CD8-positive, alpha-beta T cell (primary cell): ENCODE measurements at regions of chr7 and their contacts with region 1.

Region 1: DNA sequence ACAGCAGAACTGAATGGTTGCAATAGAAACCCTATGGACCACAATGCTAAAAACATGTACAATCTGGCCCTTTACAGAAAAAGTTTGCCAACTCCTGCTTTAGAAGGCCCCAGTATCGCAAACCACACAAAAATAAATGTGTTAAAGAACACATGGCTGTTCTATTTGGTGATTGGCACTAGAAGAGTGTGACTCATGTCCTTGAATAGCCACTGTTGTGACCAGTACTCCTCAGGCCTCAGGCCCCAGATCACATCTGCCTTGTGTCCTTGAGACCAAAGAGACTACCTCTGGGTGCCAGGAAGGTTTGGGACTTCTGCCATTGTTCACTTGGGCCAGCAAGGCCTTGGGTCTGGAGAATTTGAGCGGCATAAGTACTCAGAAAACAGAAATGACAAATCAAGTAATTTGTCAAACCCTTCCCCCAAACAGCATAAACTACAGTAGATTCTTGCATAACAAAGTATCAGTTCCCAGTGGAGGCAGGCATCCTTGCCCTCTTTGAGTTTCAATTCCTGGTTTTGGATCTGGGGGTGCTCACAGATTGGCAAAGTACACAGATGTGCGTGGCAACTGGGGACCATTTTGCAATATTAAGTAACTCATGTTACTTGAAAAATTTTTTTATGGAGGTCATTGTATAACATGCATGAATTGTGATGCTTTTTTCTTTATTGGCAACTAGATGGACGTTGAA is 50.2 kb downstream of the MTURN start:
- DNase-seq: peak in 1 of 9 experiments; percentile 36
- ATAC-seq: no peak
- H3K4me3 ChIP-seq: no peak overlapping the region
- H3K4me3 Mint-ChIP-seq: no peak overlapping the region
- H3K27ac ChIP-seq: no peak overlapping the region
- H3K27ac Mint-ChIP-seq: no peak overlapping the region
- H3K4me1 ChIP-seq: no peaks in the 10 kb centered on the region
- H3K4me1 Mint-ChIP-seq: no peaks in the 10 kb centered on the region
- H3K27me3 ChIP-seq: no peaks in the 10 kb centered on the region
- H3K27me3 Mint-ChIP-seq: no peaks in the 10 kb centered on the region
- CTCF ChIP-seq: no peak

Region 2: GRCh38 chr7:30247545-30248401 is 62.8 kb after region 1 on chr7:
- CTCF ChIA-PET with region 1: no interaction called
- POLR2A ChIA-PET with region 1: no interaction called
- intact Hi-C with region 1: loop called in 1 of 2 experiments (anchors 5 kb)
- DNase-seq: no peak
- ATAC-seq: no peak
- H3K4me3 ChIP-seq: no peak overlapping the region
- H3K4me3 Mint-ChIP-seq: no peak overlapping the region
- H3K27ac ChIP-seq: no peak overlapping the region
- H3K27ac Mint-ChIP-seq: no peak overlapping the region
- H3K4me1 ChIP-seq: peaks cover 8% of the 10 kb centered on the region
- H3K4me1 Mint-ChIP-seq: peaks cover 16% of the 10 kb centered on the region
- H3K27me3 ChIP-seq: no peaks in the 10 kb centered on the region
- H3K27me3 Mint-ChIP-seq: no peaks in the 10 kb centered on the region
- CTCF ChIP-seq: no peak

Region 3: GRCh38 chr7:30575910-30576309 is 391.0 kb after region 1 on chr7:
- CTCF ChIA-PET with region 1: no interaction called
- POLR2A ChIA-PET with region 1: no interaction called
- intact Hi-C with region 1: no loop called
- DNase-seq: no peak
- ATAC-seq: no peak
- H3K4me3 ChIP-seq: no peak overlapping the region
- H3K4me3 Mint-ChIP-seq: no peak overlapping the region
- H3K27ac ChIP-seq: no peak overlapping the region
- H3K27ac Mint-ChIP-seq: no peak overlapping the region
- H3K4me1 ChIP-seq: no peaks in the 10 kb centered on the region
- H3K4me1 Mint-ChIP-seq: no peaks in the 10 kb centered on the region
- H3K27me3 ChIP-seq: no peaks in the 10 kb centered on the region
- H3K27me3 Mint-ChIP-seq: no peaks in the 10 kb centered on the region
- CTCF ChIP-seq: no peak